GM23248 (cell line): ENCODE measurements at regions of chr3 and their contacts with region 1.

Region 1: GRCh38 chr3:150721285-150722130 is 17.8 kb upstream of the ERICH6 start:
- DNase-seq: peak; percentile 69
- H3K4me3 ChIP-seq: no peak overlapping the region
- H3K27ac ChIP-seq: no peak overlapping the region
- H3K4me1 ChIP-seq: no peaks in the 10 kb centered on the region
- H3K27me3 ChIP-seq: no peaks in the 10 kb centered on the region

Region 2: GRCh38 chr3:149572796-149573414 is 1148.6 kb before region 1 on chr3:
- in situ Hi-C with region 1: no loop called
- DNase-seq: peak; percentile 94
- H3K4me3 ChIP-seq: peak overlapping the region; percentile 31; the same call in 1 of the 2 replicates
- H3K27ac ChIP-seq: peak overlapping the region; percentile 98
- H3K4me1 ChIP-seq: peaks cover 79% of the 10 kb centered on the region
- H3K27me3 ChIP-seq: no peaks in the 10 kb centered on the region

Region 3: GRCh38 chr3:150840802-150841515 is 119.5 kb after region 1 on chr3:
- in situ Hi-C with region 1: loop called (anchors 10 kb)
- DNase-seq: no peak
- H3K4me3 ChIP-seq: no peak overlapping the region
- H3K27ac ChIP-seq: no peak overlapping the region
- H3K4me1 ChIP-seq: no peaks in the 10 kb centered on the region
- H3K27me3 ChIP-seq: peaks cover 27% of the 10 kb centered on the region